Natural killer cell (primary cell): ENCODE measurements at regions of chrX and their contacts with region 1.

Region 1: GRCh38 chrX:71254092-71254941 is at the start of gene ZMYM3:
- DNase-seq: peak; percentile 70 to 85
- ATAC-seq: peak; percentile 84 to 94 (median 90)
- H3K4me3 ChIP-seq: peak within 1 kb of the TSS; percentile 92
- H3K4me3 Mint-ChIP-seq: peak within 1 kb of the TSS; percentile 88
- H3K27ac ChIP-seq: peak within 1 kb of the TSS; percentile 90
- H3K27ac Mint-ChIP-seq: peak within 1 kb of the TSS; percentile 78 to 92
- H3K4me1 ChIP-seq: peaks cover 21% of the 10 kb centered on the region
- H3K4me1 Mint-ChIP-seq: peaks cover 12 to 22% of the 10 kb centered on the region in 2 donors
- H3K27me3 ChIP-seq: no peaks in the 10 kb centered on the region
- H3K27me3 Mint-ChIP-seq: no peaks in the 10 kb centered on the region
- CTCF ChIP-seq: no peak
- total RNA-seq, gene ZMYM3: 18.0 to 21.0 (median 20.4) TPM

Region 2: GRCh38 chrX:71144651-71145050 is 109.7 kb before region 1 on chrX and contains the start of gene NLGN3:
- intact Hi-C with region 1: no loop called
- DNase-seq: no peak
- ATAC-seq: no peak
- H3K4me3 ChIP-seq: no peak within 1 kb of the TSS
- H3K4me3 Mint-ChIP-seq: peak within 1 kb of the TSS; percentile 40
- H3K27ac ChIP-seq: no peak within 1 kb of the TSS
- H3K27ac Mint-ChIP-seq: peak within 1 kb of the TSS in 1 of 2 donors; percentile 70
- H3K4me1 ChIP-seq: peaks cover 12% of the 10 kb centered on the region
- H3K4me1 Mint-ChIP-seq: peaks cover 0 to 15% of the 10 kb centered on the region in 2 donors
- H3K27me3 ChIP-seq: no peaks in the 10 kb centered on the region
- H3K27me3 Mint-ChIP-seq: no peaks in the 10 kb centered on the region
- CTCF ChIP-seq: no peak
- total RNA-seq, gene NLGN3: 4.0 to 4.3 (median 4.0) TPM

Region 3: DNA sequence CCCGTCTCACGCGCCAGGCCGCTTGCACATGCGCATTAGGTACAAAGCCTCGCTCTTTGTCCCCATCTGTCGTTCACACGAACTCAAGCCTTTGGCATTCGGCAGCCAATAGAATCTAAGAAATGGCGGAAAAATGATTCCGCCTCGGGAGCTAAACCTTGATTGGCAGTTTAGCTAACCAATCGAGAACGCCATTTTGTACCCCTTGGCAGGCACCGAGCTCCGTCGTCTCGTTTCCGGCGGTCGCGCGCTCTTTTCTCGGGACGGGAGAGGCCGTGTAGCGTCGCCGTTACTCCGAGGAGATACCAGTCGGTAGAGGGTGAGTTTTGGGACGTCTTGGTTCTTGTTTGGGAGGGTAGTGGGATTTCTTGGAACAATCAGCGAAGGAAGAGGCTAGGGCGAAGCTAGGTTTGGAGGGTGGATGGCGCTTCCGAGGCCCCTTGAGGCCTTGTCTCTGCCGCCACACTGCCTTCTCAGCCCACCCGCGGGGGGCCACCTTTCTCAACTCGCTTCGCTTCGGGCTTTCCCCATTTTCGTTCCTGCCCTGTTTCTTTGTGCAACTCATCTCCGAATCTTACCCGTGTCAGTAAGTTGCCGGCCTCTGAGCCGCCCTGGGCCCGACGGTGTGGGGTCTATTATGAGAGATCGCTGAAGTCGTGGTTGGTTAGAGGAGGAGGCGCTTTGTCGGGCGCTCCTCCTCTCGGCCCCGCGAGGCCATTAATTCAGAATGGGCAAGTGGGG is 29.3 kb after region 1 on chrX and contains the start of gene NONO:
- intact Hi-C with region 1: loop called (anchors 1 kb)
- DNase-seq: peak; percentile 66 to 97
- ATAC-seq: peak; percentile 85 to 94 (median 90)
- H3K4me3 ChIP-seq: peak within 1 kb of the TSS; percentile 69
- H3K4me3 Mint-ChIP-seq: peak within 1 kb of the TSS; percentile 99
- H3K27ac ChIP-seq: peak within 1 kb of the TSS; percentile 93
- H3K27ac Mint-ChIP-seq: peak within 1 kb of the TSS; percentile 99 to 100
- H3K4me1 ChIP-seq: peaks cover 17% of the 10 kb centered on the region
- H3K4me1 Mint-ChIP-seq: peaks cover 16 to 20% of the 10 kb centered on the region in 2 donors
- H3K27me3 ChIP-seq: no peaks in the 10 kb centered on the region
- H3K27me3 Mint-ChIP-seq: peaks cover 7% of the 10 kb centered on the region in 2 donors
- CTCF ChIP-seq: no peak
- total RNA-seq, gene NONO: 370 to 454 (median 439) TPM

Region 4: GRCh38 chrX:71365876-71366673 is 111.8 kb after region 1 on chrX and contains the start of gene TAF1:
- intact Hi-C with region 1: loop called (anchors 1 kb)
- DNase-seq: peak; percentile 83 to 95
- ATAC-seq: peak; percentile 84 to 95 (median 89)
- H3K4me3 ChIP-seq: peak within 1 kb of the TSS; percentile 93
- H3K4me3 Mint-ChIP-seq: peak within 1 kb of the TSS; percentile 97
- H3K27ac ChIP-seq: peak within 1 kb of the TSS; percentile 95
- H3K27ac Mint-ChIP-seq: peak within 1 kb of the TSS; percentile 97
- H3K4me1 ChIP-seq: peaks cover 25% of the 10 kb centered on the region
- H3K4me1 Mint-ChIP-seq: peaks cover 22 to 30% of the 10 kb centered on the region in 2 donors
- H3K27me3 ChIP-seq: no peaks in the 10 kb centered on the region
- H3K27me3 Mint-ChIP-seq: peaks cover 0 to 6% of the 10 kb centered on the region in 2 donors
- CTCF ChIP-seq: no peak
- total RNA-seq, gene TAF1: 89.5 to 94.5 (median 94.2) TPM

Region 5: GRCh38 chrX:72306851-72307645 is 1052.7 kb after region 1 on chrX:
- intact Hi-C with region 1: loop called (anchors 10 kb)
- DNase-seq: peak; percentile 23 to 49
- ATAC-seq: peak; percentile 49 to 68 (median 59)
- H3K4me3 ChIP-seq: peak overlapping the region; percentile 43
- H3K4me3 Mint-ChIP-seq: peak overlapping the region; percentile 92
- H3K27ac ChIP-seq: no peak overlapping the region
- H3K27ac Mint-ChIP-seq: peak overlapping the region in 1 of 2 donors; percentile 76
- H3K4me1 ChIP-seq: peaks cover 40% of the 10 kb centered on the region
- H3K4me1 Mint-ChIP-seq: peaks cover 20 to 31% of the 10 kb centered on the region in 2 donors
- H3K27me3 ChIP-seq: peaks cover 35% of the 10 kb centered on the region
- H3K27me3 Mint-ChIP-seq: peaks cover 39 to 57% of the 10 kb centered on the region in 2 donors
- CTCF ChIP-seq: no peak